PC-3 (cell line): ENCODE measurements at regions of chr14 and their contacts with region 1.

Region 1: DNA sequence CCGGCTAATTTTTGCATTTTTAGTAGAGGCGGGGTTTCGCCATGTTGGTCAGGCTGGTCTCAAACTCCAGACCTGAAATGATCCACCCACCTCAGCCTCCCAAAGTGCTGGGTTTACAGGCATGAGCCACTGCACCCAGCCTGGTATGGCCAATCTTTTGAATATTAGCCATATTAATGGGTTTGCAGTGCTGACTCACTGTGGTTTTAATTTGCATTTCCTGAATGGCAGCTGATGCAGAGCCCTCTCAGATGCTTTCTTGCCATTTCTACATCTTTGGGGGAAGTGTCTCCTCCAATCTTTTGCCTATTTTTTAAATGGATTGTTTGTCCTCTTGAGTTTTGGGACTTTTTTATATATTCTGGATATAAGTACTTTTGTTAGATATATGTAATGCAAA is 55.5 kb upstream of the NPAS3 start:
- DNase-seq: peak; percentile 35
- ATAC-seq: peak; percentile 67
- H3K4me3 ChIP-seq: no peak overlapping the region
- H3K27ac ChIP-seq: no peak overlapping the region
- H3K4me1 ChIP-seq: no peaks in the 10 kb centered on the region
- H3K27me3 ChIP-seq: no peaks in the 10 kb centered on the region
- CTCF ChIP-seq: no peak

Region 2: GRCh38 chr14:32593290-32593942 is 289.8 kb before region 1 on chr14:
- CTCF ChIA-PET with region 1: no interaction called
- POLR2A ChIA-PET with region 1: no interaction called
- intact Hi-C with region 1: no loop called
- DNase-seq: peak; percentile 48
- ATAC-seq: peak; percentile 35
- H3K4me3 ChIP-seq: no peak overlapping the region
- H3K27ac ChIP-seq: no peak overlapping the region
- H3K4me1 ChIP-seq: peaks cover 30% of the 10 kb centered on the region
- H3K27me3 ChIP-seq: no peaks in the 10 kb centered on the region
- CTCF ChIP-seq: no peak

Region 3: GRCh38 chr14:32846821-32847365 is 36.3 kb before region 1 on chr14:
- CTCF ChIA-PET with region 1: no interaction called
- POLR2A ChIA-PET with region 1: no interaction called
- intact Hi-C with region 1: loop called (anchors 5 kb)
- DNase-seq: peak; percentile 85
- ATAC-seq: peak; percentile 92
- H3K4me3 ChIP-seq: no peak overlapping the region
- H3K27ac ChIP-seq: peak overlapping the region; percentile 69
- H3K4me1 ChIP-seq: peaks cover 22% of the 10 kb centered on the region
- H3K27me3 ChIP-seq: no peaks in the 10 kb centered on the region
- CTCF ChIP-seq: no peak

Region 4: DNA sequence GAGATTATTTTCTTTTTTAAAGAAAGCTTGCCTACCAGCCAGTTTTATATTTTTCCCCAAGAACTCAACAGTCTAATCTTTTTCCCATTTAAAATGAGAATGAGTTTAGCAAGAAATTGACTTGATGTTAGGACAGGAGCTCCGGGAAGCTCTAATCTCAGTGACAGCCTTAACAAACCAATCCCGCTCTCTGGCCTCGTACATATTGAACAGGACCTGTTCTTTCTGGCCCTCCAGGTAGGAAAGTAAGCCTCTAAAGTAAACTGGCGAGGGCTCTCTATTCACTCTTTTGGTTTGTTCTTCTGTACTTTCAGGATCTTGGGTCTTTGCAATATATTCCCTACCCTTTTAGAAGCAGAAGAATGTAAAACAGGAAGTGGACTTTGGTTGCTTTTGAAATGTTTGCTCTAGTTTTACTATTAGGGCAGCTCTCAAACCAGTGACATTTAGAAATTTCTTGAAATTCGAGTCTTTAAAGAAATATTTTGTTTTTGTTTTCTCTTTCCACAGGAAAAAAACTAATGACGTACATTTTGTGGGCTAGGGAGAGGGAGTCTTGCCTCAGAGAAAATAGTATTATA is 37.6 kb after region 1 on chr14:
- CTCF ChIA-PET with region 1: no interaction called
- POLR2A ChIA-PET with region 1: no interaction called
- intact Hi-C with region 1: no loop called
- DNase-seq: no peak
- ATAC-seq: no peak
- H3K4me3 ChIP-seq: no peak overlapping the region
- H3K27ac ChIP-seq: no peak overlapping the region
- H3K4me1 ChIP-seq: peaks cover 10% of the 10 kb centered on the region
- H3K27me3 ChIP-seq: no peaks in the 10 kb centered on the region
- CTCF ChIP-seq: no peak